A549 (cell line): ENCODE measurements at regions of chr7 and their contacts with region 1.

Region 1: GRCh38 chr7:155815332-155816191 is 3.3 kb upstream of the SHH start:
- DNase-seq: peak; percentile 63 to 81
- ATAC-seq: peak; percentile 67 to 87
- H3K4me3 ChIP-seq: no peak overlapping the region
- H3K27ac ChIP-seq: peak overlapping the region; percentile 66 to 88
- H3K4me1 ChIP-seq: peaks cover 24% of the 10 kb centered on the region
- CTCF ChIP-seq: peak; percentile 90
- EP300 ChIP-seq: no peak
- POLR2A ChIP-seq: no peak
- RAD21 ChIP-seq: peak; percentile 96 to 99

Region 2: DNA sequence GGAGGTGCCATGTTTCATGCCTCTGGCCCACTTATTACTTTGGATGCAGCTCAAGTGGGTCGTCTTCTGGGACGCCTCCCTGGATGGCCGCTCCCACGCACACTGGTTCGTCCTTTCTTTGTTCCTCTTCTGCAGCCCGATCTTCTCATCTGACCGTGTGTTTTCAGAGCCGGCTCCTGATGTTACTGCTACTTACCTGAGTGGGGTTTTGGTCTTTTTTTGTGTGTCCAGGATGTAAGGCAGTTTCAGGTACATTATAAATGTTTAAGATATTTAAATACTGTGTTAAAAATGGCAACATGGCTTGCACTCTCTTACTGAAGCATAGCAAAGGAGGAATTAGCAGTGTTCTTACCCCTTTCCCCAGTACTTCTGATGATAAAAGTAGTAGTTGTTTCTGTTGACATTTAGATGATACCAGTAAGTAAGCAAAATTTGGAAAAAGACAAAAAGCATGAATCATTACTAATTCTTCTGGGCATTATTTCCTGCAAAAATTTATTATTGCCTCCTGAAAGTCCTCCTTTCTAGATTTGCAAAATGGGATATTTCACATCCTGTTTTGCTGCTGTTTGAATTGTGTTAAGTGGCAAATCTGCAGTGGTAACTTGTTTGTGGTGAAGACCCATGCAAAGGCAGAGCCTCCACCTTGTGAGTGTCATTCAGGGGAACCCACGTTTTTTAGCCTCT is 62.7 kb before region 1 on chr7:
- CTCF ChIA-PET with region 1: no interaction called
- POLR2A ChIA-PET with region 1: no interaction called
- DNase-seq: no peak
- ATAC-seq: no peak
- H3K4me3 ChIP-seq: no peak overlapping the region
- H3K27ac ChIP-seq: no peak overlapping the region
- H3K4me1 ChIP-seq: no peaks in the 10 kb centered on the region; the same call in 2 of the 3 replicates
- CTCF ChIP-seq: no peak
- EP300 ChIP-seq: no peak
- POLR2A ChIP-seq: no peak
- RAD21 ChIP-seq: no peak

Region 3: DNA sequence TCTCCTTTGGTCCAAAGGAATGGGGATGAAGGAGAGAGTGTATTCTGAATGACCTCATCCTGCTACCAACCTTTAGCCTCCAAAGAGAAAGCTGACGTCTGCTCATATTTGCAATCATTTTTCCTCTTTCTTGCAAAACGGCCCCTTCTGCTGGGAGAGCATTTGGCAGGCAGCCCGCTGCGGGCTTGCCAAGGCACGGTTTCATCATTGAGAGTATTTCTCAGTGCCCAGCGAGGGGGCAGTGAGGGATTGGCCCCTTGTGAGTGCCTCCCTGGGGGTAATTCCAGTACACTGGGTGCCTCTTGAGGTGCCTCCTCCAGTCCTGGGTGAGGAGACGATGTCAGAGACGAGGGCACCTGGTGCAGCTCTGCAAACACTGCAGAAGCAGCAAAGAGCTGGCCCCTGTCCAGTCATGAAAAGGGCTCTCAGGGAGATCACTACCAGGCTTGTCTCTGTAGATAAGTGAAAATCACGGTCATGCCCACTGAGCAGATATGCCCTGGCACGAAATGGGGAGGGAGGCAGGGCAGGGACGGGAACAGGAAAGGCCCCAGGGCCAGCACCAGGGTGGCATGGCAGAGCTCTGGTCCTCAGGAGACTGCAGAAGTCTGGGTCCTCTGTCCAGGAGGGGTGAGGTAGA is 45.4 kb after region 1 on chr7:
- CTCF ChIA-PET with region 1: interaction called, 10 read pairs
- POLR2A ChIA-PET with region 1: no interaction called
- DNase-seq: peak; percentile 60 to 92
- ATAC-seq: peak; percentile 80 to 87
- H3K4me3 ChIP-seq: peak overlapping the region; percentile 7; the same call in 2 of the 3 replicates
- H3K27ac ChIP-seq: peak overlapping the region; percentile 82 to 87
- H3K4me1 ChIP-seq: peaks cover 61% of the 10 kb centered on the region
- CTCF ChIP-seq: no peak
- EP300 ChIP-seq: peak; percentile 97
- POLR2A ChIP-seq: no peak
- RAD21 ChIP-seq: peak; percentile 28 to 79

Region 4: GRCh38 chr7:156156734-156157610 is 341.4 kb after region 1 on chr7:
- CTCF ChIA-PET with region 1: interaction called, 25 read pairs
- POLR2A ChIA-PET with region 1: no interaction called
- DNase-seq: peak; percentile 66 to 72
- ATAC-seq: peak; percentile 85 to 96
- H3K4me3 ChIP-seq: no peak overlapping the region
- H3K27ac ChIP-seq: peak overlapping the region; percentile 47 to 80; a peak in 4 of 6 replicates
- H3K4me1 ChIP-seq: peaks cover 14% of the 10 kb centered on the region
- CTCF ChIP-seq: peak; percentile 57
- EP300 ChIP-seq: no peak
- POLR2A ChIP-seq: no peak
- RAD21 ChIP-seq: peak; percentile 73 to 79

Region 5: GRCh38 chr7:156473476-156474240 is 658.1 kb after region 1 on chr7:
- CTCF ChIA-PET with region 1: interaction called, 55 read pairs
- POLR2A ChIA-PET with region 1: no interaction called
- DNase-seq: peak; percentile 53 to 59
- ATAC-seq: peak; percentile 84 to 87
- H3K4me3 ChIP-seq: no peak overlapping the region
- H3K27ac ChIP-seq: no peak overlapping the region
- H3K4me1 ChIP-seq: peaks cover 20% of the 10 kb centered on the region
- CTCF ChIP-seq: peak; percentile 89
- EP300 ChIP-seq: no peak
- POLR2A ChIP-seq: no peak
- RAD21 ChIP-seq: peak; percentile 82 to 87